GM12878 (cell line): ENCODE measurements at regions of chr4 and their contacts with region 1.

Region 1: DNA sequence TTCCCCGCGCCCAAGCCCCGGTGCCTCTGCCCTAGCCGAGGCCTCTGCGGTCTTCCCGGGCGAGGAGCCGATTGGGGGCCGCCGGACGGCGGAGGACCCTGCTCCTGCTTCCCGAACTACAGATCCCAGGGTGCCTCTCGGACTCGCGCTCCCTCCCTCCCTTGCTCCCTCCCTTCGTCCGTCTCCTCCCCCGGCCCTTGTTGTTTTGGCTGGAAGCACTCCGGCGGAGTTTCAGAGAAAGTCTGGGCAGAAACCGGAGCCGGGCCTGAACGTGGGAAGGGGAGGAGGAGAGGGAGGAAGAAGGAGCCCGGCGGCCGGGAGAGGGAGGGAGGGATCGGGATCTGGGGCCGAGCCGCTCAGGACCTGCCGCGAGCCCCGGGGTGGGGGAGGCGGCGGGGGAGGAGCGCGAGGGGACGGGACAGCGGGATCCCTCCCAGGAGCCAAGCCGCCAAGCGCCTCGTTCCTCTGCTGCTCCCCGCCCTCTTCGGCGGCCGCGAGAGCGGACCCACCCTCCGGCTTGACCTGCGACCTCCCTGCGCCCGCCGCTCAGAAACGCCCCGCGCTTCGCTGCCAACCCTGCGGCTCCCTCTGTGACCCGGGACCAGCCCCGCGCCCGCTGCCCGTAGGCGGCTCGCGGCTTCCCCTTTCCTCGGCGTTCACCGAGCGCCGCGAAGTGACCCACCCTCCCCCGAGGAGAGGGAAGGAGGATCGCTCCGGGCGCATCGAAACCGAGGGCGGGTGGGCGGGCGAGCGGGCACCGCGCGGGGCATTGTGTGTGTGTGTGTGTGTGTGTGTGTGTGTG is 496 bp upstream of the GAB1 start:
- DNase-seq: no peak
- ATAC-seq: peak; percentile 66
- H3K4me3 ChIP-seq: peak overlapping the region; percentile 87
- H3K27ac ChIP-seq: no peak overlapping the region
- H3K4me1 ChIP-seq: no peaks in the 10 kb centered on the region; the same call in 1 of the 2 replicates
- H3K27me3 ChIP-seq: 0 out of 4 replicates have a peak, but pooled peaks cover 1 to 3% of the 10 kb centered on the region in 2 experiments
- CTCF ChIP-seq: no peak
- EP300 ChIP-seq: no peak
- POLR2A ChIP-seq: peak; percentile 41; the same call in 1 of the 2 replicates
- RAD21 ChIP-seq: no peak

Region 2: DNA sequence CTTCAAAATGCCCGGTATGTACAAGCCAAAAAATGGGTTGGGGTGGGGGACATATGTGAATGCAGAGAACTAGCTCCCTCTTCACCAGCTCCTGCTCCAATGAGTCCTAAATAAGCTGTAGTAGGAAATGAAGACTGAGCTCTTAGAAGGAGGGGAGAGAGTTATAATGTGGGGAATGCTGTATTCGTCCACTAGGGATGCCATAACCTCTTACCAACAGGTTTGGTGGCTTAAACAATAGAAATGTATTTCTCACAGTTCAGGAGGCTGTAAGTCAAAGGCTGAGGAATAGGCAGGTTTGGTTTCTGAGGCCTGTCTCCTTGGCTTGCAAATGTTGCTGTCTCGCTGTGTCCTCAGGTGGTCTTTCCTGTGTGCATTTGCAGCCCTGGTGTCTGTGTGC is 485.7 kb before region 1 on chr4:
- CTCF ChIA-PET with region 1: no interaction called
- POLR2A ChIA-PET with region 1: no interaction called
- RAD21 ChIA-PET with region 1: no interaction called
- SMC1A ChIA-PET with region 1: no interaction called
- in situ Hi-C with region 1: no loop called
- intact Hi-C with region 1: no loop called
- DNase-seq: no peak
- ATAC-seq: no peak
- H3K4me3 ChIP-seq: no peak overlapping the region
- H3K27ac ChIP-seq: no peak overlapping the region
- H3K4me1 ChIP-seq: no peaks in the 10 kb centered on the region
- H3K27me3 ChIP-seq: peaks cover 0 to 5% of the 10 kb centered on the region in 2 experiments; a peak in 2 of 4 replicates
- CTCF ChIP-seq: peak in 2 of 3 experiments; percentile 19 to 20; a peak in 1 of 6 replicates
- EP300 ChIP-seq: no peak
- POLR2A ChIP-seq: no peak
- RAD21 ChIP-seq: no peak

Region 3: DNA sequence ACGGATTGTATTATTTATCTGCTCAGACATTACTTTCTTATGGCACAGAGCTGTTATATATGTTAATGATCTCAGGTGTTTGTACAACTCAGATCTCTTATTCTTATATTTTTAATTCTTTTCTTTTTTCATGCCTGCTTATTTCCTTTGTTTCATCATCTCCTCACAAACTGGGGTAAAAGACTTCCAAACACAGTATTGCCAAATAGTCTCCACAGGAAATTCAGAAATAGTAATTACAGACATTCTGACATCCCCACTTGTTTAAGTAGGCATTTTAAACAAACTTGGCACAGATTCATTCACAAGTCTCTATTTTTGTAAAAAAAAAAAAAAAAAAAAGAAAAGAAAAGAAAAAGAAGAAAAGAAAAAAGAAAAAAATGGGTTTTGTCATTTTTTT is 281.2 kb before region 1 on chr4:
- CTCF ChIA-PET with region 1: no interaction called
- POLR2A ChIA-PET with region 1: no interaction called
- RAD21 ChIA-PET with region 1: no interaction called
- SMC1A ChIA-PET with region 1: no interaction called
- in situ Hi-C with region 1: no loop called
- intact Hi-C with region 1: no loop called
- DNase-seq: no peak
- ATAC-seq: no peak
- H3K4me3 ChIP-seq: no peak overlapping the region
- H3K27ac ChIP-seq: no peak overlapping the region
- H3K4me1 ChIP-seq: no peaks in the 10 kb centered on the region
- H3K27me3 ChIP-seq: no peaks in the 10 kb centered on the region
- CTCF ChIP-seq: no peak
- EP300 ChIP-seq: no peak
- POLR2A ChIP-seq: no peak
- RAD21 ChIP-seq: no peak

Region 4: GRCh38 chr4:143109376-143109775 is 226.8 kb before region 1 on chr4:
- CTCF ChIA-PET with region 1: no interaction called
- POLR2A ChIA-PET with region 1: no interaction called
- RAD21 ChIA-PET with region 1: no interaction called
- SMC1A ChIA-PET with region 1: no interaction called
- in situ Hi-C with region 1: no loop called
- intact Hi-C with region 1: no loop called
- DNase-seq: no peak
- ATAC-seq: no peak
- H3K4me3 ChIP-seq: no peak overlapping the region
- H3K27ac ChIP-seq: no peak overlapping the region
- H3K4me1 ChIP-seq: no peaks in the 10 kb centered on the region
- H3K27me3 ChIP-seq: no peaks in the 10 kb centered on the region
- CTCF ChIP-seq: no peak
- EP300 ChIP-seq: no peak
- POLR2A ChIP-seq: no peak
- RAD21 ChIP-seq: no peak

Region 5: DNA sequence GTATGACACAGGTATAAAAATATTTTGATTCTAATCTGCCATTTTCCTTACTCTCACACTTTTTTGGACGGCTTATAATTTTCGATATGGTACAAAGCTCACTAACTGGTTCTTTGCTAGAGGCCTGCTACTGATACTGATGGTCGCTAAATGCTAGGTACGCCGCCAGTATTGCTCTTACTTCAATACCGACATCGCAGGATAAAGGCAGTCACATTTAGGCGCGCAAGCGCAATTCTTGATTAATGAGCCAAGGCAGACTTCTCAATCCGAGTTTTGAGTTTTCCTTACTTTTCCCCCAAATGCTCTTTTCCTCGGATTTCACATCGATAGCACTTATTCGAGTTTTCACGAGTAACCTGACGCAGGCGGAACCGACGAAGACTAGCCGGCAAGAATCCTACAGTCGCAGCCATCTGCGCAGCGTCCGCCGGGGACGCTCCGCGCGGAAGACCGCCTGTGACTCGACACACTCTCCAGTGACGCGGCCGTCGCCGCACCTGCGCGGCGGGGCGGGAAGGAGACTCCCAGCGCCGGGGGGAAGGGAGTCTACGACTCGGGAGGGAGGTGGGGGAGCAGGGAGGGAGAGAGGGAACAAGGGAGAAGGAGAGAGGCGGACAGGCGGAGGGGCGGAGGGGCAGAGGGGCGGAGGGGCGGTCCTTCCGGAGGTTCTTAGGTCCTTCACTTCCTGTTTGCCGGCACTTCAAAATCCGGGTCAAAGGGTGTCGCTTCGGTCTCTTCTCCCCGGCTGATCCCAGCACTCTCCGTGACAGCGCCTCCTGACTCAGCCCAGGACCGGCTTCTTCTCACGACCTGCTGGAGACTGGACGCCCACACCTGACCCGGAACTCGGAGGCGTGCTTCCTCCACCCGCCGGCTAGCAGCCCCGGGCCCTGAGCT is 151.7 kb before region 1 on chr4 and contains the start of gene USP38:
- CTCF ChIA-PET with region 1: interaction called, 3 read pairs
- POLR2A ChIA-PET with region 1: no interaction called
- RAD21 ChIA-PET with region 1: no interaction called
- SMC1A ChIA-PET with region 1: interaction called, 3 read pairs
- in situ Hi-C with region 1: no loop called
- intact Hi-C with region 1: loop called (anchors 5 kb)
- DNase-seq: peak; percentile 73
- ATAC-seq: peak; percentile 88
- H3K4me3 ChIP-seq: peak within 1 kb of the TSS; percentile 89
- H3K27ac ChIP-seq: peak within 1 kb of the TSS; percentile 77
- H3K4me1 ChIP-seq: no peaks in the 10 kb centered on the region
- H3K27me3 ChIP-seq: no peaks in the 10 kb centered on the region
- CTCF ChIP-seq: no peak
- EP300 ChIP-seq: no peak
- POLR2A ChIP-seq: peak; percentile 77
- RAD21 ChIP-seq: no peak
- polyA plus RNA-seq, gene USP38: 4.4 to 4.6 TPM

Region 6: GRCh38 chr4:143270256-143270838 is 65.8 kb before region 1 on chr4:
- CTCF ChIA-PET with region 1: no interaction called
- POLR2A ChIA-PET with region 1: no interaction called
- RAD21 ChIA-PET with region 1: no interaction called
- SMC1A ChIA-PET with region 1: no interaction called
- in situ Hi-C with region 1: no loop called
- intact Hi-C with region 1: no loop called
- DNase-seq: no peak
- ATAC-seq: no peak
- H3K4me3 ChIP-seq: no peak overlapping the region
- H3K27ac ChIP-seq: no peak overlapping the region
- H3K4me1 ChIP-seq: no peaks in the 10 kb centered on the region
- H3K27me3 ChIP-seq: no peaks in the 10 kb centered on the region
- CTCF ChIP-seq: no peak
- EP300 ChIP-seq: no peak
- POLR2A ChIP-seq: no peak
- RAD21 ChIP-seq: no peak

Region 7: GRCh38 chr4:143346206-143346605 is 10.0 kb after region 1 on chr4:
- CTCF ChIA-PET with region 1: interaction called, 14 read pairs
- POLR2A ChIA-PET with region 1: interaction called, 94 read pairs
- RAD21 ChIA-PET with region 1: interaction called, 16 read pairs
- SMC1A ChIA-PET with region 1: interaction called, 62 read pairs
- in situ Hi-C with region 1: no loop called
- intact Hi-C with region 1: no loop called
- DNase-seq: no peak
- ATAC-seq: no peak
- H3K4me3 ChIP-seq: no peak overlapping the region
- H3K27ac ChIP-seq: no peak overlapping the region
- H3K4me1 ChIP-seq: no peaks in the 10 kb centered on the region
- H3K27me3 ChIP-seq: no peaks in the 10 kb centered on the region
- CTCF ChIP-seq: no peak
- EP300 ChIP-seq: no peak
- POLR2A ChIP-seq: no peak
- RAD21 ChIP-seq: no peak

Region 8: DNA sequence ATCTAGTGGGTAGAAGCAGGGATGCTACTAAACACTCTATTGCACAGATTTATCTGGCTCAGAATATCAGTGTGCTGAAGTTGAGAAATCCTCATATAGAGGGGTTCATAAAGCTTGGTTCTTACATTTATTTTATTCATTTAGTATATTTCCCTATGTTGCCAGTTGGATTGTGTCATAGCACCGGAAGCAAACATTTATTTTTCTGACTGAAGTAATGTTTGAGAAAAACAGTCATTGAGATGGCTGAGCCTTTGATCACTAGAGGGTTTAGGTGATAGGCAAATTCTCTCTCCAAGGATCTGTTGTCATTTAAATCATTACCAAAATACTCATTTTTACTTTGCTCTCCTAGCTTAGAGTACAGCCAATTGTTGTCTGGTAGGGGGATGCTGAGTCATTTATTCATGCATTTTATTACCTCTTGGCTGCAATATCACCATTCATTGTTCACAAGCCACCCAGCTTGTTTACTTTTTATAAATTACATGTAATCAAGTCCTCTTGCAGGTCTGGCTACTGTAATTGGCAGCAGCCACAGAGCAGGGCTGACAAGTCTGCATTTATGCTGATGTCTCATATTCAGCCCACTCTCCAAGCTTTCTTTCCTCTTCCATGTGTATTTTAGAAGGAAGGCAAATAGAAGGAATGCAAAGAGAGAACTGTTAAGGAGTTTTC is 15.7 kb after region 1 on chr4:
- CTCF ChIA-PET with region 1: interaction called, 20 read pairs
- POLR2A ChIA-PET with region 1: interaction called, 94 read pairs
- RAD21 ChIA-PET with region 1: interaction called, 61 read pairs
- SMC1A ChIA-PET with region 1: interaction called, 62 read pairs
- in situ Hi-C with region 1: no loop called
- intact Hi-C with region 1: no loop called
- DNase-seq: no peak
- ATAC-seq: no peak; the same call in 2 of the 3 replicates
- H3K4me3 ChIP-seq: no peak overlapping the region
- H3K27ac ChIP-seq: no peak overlapping the region
- H3K4me1 ChIP-seq: 0 out of 2 replicates have a peak, but pooled peaks cover 1% of the 10 kb centered on the region
- H3K27me3 ChIP-seq: no peaks in the 10 kb centered on the region
- CTCF ChIP-seq: no peak
- EP300 ChIP-seq: no peak
- POLR2A ChIP-seq: no peak
- RAD21 ChIP-seq: no peak

Region 9: DNA sequence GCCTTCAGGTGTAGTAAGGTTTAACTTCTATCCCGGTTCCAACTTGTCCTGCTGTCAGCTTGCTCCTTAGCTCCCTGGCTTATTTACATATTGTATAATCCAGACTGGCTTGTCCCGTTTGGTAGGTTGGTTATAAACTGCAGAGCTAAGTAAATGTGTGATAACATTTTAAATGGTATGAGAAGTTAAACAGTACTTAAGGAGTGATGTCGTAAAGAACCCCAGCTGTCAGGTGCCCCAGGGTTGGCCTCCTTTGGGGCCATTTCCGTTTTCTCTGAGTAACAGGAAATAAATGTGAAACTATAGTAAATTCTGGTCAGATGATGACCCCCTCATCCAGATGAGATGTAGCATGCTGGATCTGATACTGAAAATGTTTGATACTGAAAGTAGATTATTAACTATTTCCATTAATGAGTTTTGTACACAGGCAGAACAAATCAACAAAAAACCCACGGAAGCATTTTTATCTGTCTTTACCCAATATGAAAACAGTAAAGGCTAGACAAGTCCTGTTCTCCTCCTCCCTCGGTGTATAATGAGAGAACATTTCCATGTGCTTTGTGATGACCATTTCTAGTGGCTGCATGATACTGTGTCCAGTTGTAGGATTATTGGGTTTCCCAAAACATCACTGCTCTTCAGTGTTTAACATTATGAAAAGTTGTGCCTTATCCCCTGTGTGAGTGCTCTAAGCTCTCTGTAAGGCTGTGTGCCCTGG is 22.9 kb after region 1 on chr4:
- CTCF ChIA-PET with region 1: interaction called, 20 read pairs
- POLR2A ChIA-PET with region 1: interaction called, 94 read pairs
- RAD21 ChIA-PET with region 1: interaction called, 61 read pairs
- SMC1A ChIA-PET with region 1: interaction called, 62 read pairs
- in situ Hi-C with region 1: no loop called
- intact Hi-C with region 1: loop called (anchors 2 kb)
- DNase-seq: no peak
- ATAC-seq: peak; percentile 83
- H3K4me3 ChIP-seq: no peak overlapping the region
- H3K27ac ChIP-seq: peak overlapping the region; percentile 66
- H3K4me1 ChIP-seq: peaks cover 21% of the 10 kb centered on the region
- H3K27me3 ChIP-seq: no peaks in the 10 kb centered on the region
- CTCF ChIP-seq: no peak
- EP300 ChIP-seq: peak; percentile 41 to 67; a peak in 2 of 4 replicates
- POLR2A ChIP-seq: no peak
- RAD21 ChIP-seq: no peak